ENCODE measurements at regions of chr1 and their contacts with region 1.

Region 1: DNA sequence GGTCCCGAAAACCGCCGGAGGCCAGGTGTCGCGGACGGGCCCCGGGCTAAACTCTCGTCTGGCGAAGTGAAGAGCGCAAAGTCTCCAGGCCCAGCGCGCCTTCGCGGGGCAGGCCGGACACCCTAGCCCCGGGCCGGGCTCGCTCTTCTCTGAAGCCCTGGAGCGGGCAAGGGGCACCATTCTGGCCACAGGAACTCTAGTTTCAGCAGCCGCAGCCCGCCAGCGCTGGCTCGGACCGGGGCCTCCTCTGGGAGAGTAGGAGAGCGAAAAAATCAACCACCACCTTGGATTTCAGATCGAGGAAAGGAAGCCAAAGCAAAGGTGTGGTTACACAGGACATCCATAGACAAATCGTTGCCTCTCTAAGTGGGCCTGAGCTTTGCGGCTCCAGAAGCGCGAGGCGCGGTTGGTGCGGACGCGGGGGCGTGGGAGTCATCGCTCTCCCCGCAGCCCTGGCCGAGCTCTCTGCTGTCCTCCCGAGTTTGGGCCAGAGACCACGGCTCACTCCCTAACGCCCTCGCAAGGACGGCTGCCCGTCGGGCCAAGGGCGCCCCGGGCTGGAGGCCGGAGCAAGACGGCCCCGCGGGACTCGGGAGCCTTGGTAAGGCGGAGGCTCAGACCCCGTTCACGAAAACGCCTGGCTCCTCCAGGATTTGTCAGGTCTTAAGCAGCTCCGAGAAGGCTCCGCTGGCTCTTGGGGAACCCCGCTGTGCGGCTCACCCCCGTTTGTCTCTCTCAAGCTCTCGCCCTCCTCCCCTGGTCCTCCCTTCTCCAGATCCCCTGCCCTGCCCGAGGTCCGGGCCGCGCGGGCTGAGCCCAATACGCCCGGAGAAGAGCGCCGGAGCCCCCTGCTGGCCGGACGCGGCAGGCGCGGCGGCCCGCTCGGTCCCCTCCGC is 132.9 kb upstream of the DPYD start:
- DNase-seq: peak; percentile 56 to 72
- ATAC-seq: peak; percentile 85 to 97 (median 94)
- H3K4me3 ChIP-seq: peak overlapping the region; percentile 65
- H3K27ac ChIP-seq: no peak overlapping the region
- H3K4me1 ChIP-seq: peaks cover 5% of the 10 kb centered on the region
- H3K27me3 ChIP-seq: peaks cover 5 to 54% (median 15%) of the 10 kb centered on the region in 3 donors
- CTCF ChIP-seq: peak; percentile 92

Region 2: DNA sequence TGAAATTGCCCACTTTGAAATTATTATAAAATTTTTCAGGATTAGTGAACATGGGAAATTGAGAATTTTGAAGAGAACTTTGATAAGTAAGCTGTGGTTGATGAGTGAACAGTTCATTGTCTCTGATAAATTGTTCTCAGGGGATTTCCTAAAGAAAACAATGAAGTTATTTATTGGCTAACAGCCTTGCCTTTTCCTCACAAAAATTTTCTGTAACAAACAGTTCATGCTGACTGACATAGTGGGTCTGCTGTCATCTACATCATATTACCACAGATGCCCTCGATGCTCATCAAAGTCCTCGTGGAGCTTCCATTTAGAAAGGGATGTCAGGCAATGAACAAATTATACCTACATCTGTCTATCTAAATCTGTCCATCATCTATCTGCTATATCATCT is 1218.7 kb before region 1 on chr1:
- intact Hi-C with region 1: no loop called
- DNase-seq: no peak
- ATAC-seq: no peak
- H3K4me3 ChIP-seq: no peak overlapping the region
- H3K27ac ChIP-seq: no peak overlapping the region
- H3K4me1 ChIP-seq: no peaks in the 10 kb centered on the region
- H3K27me3 ChIP-seq: no peaks in the 10 kb centered on the region
- CTCF ChIP-seq: no peak

Region 3: GRCh38 chr1:96966536-96967138 is 1087.1 kb before region 1 on chr1:
- intact Hi-C with region 1: loop called (anchors 2 to 10 kb)
- DNase-seq: peak; percentile 47 to 76
- ATAC-seq: peak; percentile 47 to 76 (median 68)
- H3K4me3 ChIP-seq: no peak overlapping the region
- H3K27ac ChIP-seq: no peak overlapping the region
- H3K4me1 ChIP-seq: no peaks in the 10 kb centered on the region
- H3K27me3 ChIP-seq: no peaks in the 10 kb centered on the region
- CTCF ChIP-seq: peak; percentile 90

Region 4: GRCh38 chr1:96973605-96974004 is 1080.1 kb before region 1 on chr1:
- intact Hi-C with region 1: loop called in 1 of 2 experiments (anchors 10 kb)
- DNase-seq: no peak
- ATAC-seq: no peak
- H3K4me3 ChIP-seq: no peak overlapping the region
- H3K27ac ChIP-seq: no peak overlapping the region
- H3K4me1 ChIP-seq: no peaks in the 10 kb centered on the region
- H3K27me3 ChIP-seq: peaks cover 0 to 3% (median 0%) of the 10 kb centered on the region in 3 donors
- CTCF ChIP-seq: no peak

Region 5: DNA sequence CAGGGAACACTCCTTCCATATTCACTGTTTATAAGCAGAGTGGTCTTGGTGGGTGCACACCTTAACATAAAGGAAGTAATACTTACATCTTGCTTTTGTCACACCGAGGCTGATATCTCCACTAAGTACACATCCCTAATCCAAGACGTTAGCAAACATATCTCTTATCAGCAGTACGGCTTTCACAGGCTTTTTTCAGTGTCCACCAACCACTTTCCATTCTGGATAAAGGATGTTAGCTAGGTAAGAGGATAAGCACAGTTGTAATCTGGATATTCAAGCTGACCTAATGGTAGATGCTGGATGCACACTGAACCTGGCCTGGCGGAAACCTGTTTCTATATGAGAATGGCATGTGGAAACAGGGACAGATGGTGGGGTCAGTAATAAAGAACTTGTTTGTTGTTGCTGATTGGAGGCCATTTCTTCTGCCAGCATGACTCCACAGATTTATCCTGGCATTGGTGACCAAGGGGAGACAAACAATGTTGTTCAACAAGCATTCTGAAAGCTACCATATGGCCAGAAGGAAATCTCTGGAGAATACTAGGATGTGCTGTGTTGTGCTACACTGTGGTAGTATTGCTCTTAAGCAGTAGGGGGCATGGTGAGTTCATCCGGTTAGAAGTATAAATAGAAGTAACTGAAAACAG is 915.7 kb before region 1 on chr1:
- intact Hi-C with region 1: loop called (anchors 2 to 5 kb)
- DNase-seq: no peak
- ATAC-seq: peak; percentile 84 to 99 (median 94)
- H3K4me3 ChIP-seq: peak overlapping the region; percentile 60
- H3K27ac ChIP-seq: peak overlapping the region; percentile 54
- H3K4me1 ChIP-seq: peaks cover 7% of the 10 kb centered on the region
- H3K27me3 ChIP-seq: no peaks in the 10 kb centered on the region
- CTCF ChIP-seq: peak; percentile 67

Region 6: GRCh38 chr1:97920832-97921571 is 132.7 kb before region 1 on chr1 and contains the start of gene DPYD:
- intact Hi-C with region 1: loop called in 1 of 2 experiments (anchors 5 kb)
- DNase-seq: peak; percentile 90 to 93
- ATAC-seq: peak; percentile 96 to 98 (median 98)
- H3K4me3 ChIP-seq: peak within 1 kb of the TSS; percentile 89
- H3K27ac ChIP-seq: peak within 1 kb of the TSS; percentile 92
- H3K4me1 ChIP-seq: peaks cover 23% of the 10 kb centered on the region
- H3K27me3 ChIP-seq: no peaks in the 10 kb centered on the region
- CTCF ChIP-seq: no peak
- total RNA-seq, gene DPYD: 5.1 to 7.3 (median 5.8) TPM

Region 7: DNA sequence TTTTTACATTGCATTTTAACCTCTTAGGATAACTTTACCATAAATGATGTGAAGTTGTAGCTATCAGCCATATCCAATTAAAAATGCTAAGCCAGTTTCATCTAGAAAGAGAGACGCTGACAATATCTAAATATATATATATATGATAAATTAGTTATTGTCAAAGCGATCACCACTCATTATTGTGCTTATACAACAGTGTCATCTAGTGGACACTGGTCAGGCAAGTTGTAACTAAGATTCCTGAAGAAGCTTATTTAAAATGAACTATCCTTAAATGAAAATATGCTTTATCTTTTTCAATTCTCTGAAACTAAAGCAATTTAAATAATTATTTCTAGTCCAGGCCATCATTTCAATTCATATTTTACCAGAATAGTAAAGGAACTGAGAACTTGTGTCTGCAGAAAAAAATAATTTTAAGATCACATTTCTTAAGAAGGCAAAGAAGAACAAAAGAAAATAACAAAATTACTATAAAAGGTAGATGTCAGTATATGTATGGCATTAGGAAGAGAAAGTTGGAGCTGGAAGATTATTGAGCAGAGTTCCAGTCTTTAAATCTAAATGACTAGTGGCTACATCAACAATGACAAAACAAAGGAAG is 414.5 kb after region 1 on chr1:
- intact Hi-C with region 1: loop called in 1 of 2 experiments (anchors 10 kb)
- DNase-seq: no peak
- ATAC-seq: peak in 1 of 4 donors; percentile 54
- H3K4me3 ChIP-seq: no peak overlapping the region
- H3K27ac ChIP-seq: no peak overlapping the region
- H3K4me1 ChIP-seq: no peaks in the 10 kb centered on the region
- H3K27me3 ChIP-seq: no peaks in the 10 kb centered on the region
- CTCF ChIP-seq: peak; percentile 70